ENCODE measurements at regions of chr12 and their contacts with region 1.

Region 1: DNA sequence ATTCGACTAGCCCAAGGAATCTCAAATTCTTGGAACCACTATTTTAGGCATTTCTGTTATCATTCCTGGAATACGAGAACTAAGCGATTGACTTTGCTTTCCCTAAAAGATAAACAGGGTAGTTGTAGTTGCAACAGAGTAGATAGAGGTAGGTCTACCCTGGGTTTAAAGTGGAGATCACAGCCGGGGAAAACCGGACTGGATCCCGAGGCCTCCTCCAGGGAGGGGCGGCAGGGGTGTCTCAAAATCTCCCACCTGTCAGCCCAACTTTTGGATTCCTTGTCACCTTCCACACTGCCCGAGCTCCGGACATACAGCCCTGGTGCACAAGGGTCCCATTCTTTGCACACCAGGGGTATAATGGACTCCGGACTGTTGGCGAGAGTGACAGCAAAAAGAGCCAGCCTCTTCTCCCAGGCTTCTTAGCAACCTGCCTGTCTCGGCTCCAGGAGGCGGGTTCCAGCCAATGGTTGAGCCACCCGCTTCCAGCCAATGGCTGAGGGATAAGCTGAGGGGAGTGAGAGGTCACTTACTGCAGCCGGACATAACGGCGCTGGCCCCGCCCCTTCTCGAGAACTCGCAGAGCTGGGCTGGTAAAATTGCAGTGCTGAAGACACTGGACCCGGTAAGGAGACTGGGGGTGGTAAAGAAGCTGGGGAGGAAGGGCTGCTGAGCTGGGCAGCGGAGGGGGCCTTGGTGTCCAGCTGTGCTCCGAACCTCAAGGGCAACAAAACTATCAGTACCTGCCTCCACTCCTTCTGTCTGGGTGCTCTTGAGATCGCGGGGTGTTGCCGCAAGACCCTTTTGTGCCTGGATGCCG is at the start of gene SUOX:
- DNase-seq: peak; percentile 90 to 94
- H3K4me3 ChIP-seq: peak within 1 kb of the TSS; percentile 77 to 97 (median 89)
- H3K27ac ChIP-seq: peak within 1 kb of the TSS; percentile 72
- H3K4me1 ChIP-seq: peaks cover 0 to 4% (median 0%) of the 10 kb centered on the region in 4 experiments; a peak in 2 of 7 replicates
- H3K27me3 ChIP-seq: no peaks in the 10 kb centered on the region
- CTCF ChIP-seq: no peak
- EP300 ChIP-seq: no peak
- POLR2A ChIP-seq: peak in 1 of 2 experiments; percentile 80; a peak in 2 of 3 replicates
- RAD21 ChIP-seq: no peak
- total RNA-seq, gene SUOX: 22.5 and 23.1 TPM in 2 replicates

Region 2: GRCh38 chr12:55955800-55956508 is 41.0 kb before region 1 on chr12:
- CTCF ChIA-PET with region 1: interaction called, 10 read pairs
- POLR2A ChIA-PET with region 1: no interaction called
- DNase-seq: no peak
- H3K4me3 ChIP-seq: no peak overlapping the region
- H3K27ac ChIP-seq: no peak overlapping the region
- H3K4me1 ChIP-seq: no peaks in the 10 kb centered on the region
- H3K27me3 ChIP-seq: no peaks in the 10 kb centered on the region
- CTCF ChIP-seq: peak in 1 of 3 experiments; percentile 9; a peak in 1 of 4 replicates
- EP300 ChIP-seq: no peak
- POLR2A ChIP-seq: no peak
- RAD21 ChIP-seq: no peak; a peak in 1 of 4 replicates

Region 3: DNA sequence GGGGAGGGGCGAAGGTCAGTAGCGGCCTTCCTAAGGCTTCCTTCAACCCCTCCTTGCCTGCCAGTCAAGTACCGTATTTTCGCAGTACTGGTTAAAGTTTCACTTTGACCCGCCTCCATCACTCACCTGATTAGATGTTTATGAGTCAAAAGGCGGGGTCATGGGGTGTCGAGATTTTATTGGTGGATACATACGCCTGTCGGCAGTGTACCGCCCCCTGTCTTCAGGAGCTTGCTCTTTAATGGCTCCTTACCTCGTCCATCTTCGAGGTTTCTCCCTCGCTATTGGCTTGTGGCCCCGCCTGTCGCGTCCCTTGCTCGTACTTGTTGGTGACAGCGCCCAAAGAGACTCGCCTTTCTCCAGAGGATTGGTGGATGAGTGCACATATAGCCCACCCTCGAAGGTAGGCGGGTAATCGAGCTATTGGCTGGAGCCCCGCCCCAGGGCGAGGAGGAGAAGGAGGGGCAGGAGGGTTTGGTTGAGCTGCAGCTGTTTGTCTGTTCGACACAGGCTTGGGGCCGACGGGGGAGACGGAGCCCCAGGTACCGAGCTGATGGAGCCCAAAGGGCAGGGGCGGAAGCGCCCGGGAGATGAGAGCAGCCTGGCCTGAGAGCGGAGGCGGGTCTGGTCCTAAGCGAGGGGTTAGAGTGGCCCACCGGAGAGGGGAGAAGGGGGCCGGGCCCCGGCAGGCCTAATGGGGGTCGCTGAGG is 23.2 kb before region 1 on chr12 and contains the start of gene RAB5B:
- CTCF ChIA-PET with region 1: interaction called, 14 read pairs
- POLR2A ChIA-PET with region 1: interaction called, 16 read pairs
- DNase-seq: peak; percentile 94 to 100
- H3K4me3 ChIP-seq: peak within 1 kb of the TSS; percentile 65 to 93 (median 88)
- H3K27ac ChIP-seq: peak within 1 kb of the TSS; percentile 12; the same call in 1 of the 2 replicates
- H3K4me1 ChIP-seq: peaks cover 0 to 4% (median 1%) of the 10 kb centered on the region in 4 experiments; a peak in 4 of 7 replicates
- H3K27me3 ChIP-seq: no peaks in the 10 kb centered on the region
- CTCF ChIP-seq: no peak
- EP300 ChIP-seq: no peak
- POLR2A ChIP-seq: peak; percentile 88 to 93
- RAD21 ChIP-seq: no peak
- total RNA-seq, gene RAB5B: 56.7 and 65.6 TPM in 2 replicates

Region 4: GRCh38 chr12:55982319-55982936 is 14.5 kb before region 1 on chr12:
- CTCF ChIA-PET with region 1: interaction called, 42 read pairs
- POLR2A ChIA-PET with region 1: interaction called, 24 read pairs
- DNase-seq: no peak
- H3K4me3 ChIP-seq: no peak overlapping the region
- H3K27ac ChIP-seq: no peak overlapping the region
- H3K4me1 ChIP-seq: no peaks in the 10 kb centered on the region
- H3K27me3 ChIP-seq: no peaks in the 10 kb centered on the region
- CTCF ChIP-seq: no peak
- EP300 ChIP-seq: no peak
- POLR2A ChIP-seq: no peak
- RAD21 ChIP-seq: no peak

Region 5: DNA sequence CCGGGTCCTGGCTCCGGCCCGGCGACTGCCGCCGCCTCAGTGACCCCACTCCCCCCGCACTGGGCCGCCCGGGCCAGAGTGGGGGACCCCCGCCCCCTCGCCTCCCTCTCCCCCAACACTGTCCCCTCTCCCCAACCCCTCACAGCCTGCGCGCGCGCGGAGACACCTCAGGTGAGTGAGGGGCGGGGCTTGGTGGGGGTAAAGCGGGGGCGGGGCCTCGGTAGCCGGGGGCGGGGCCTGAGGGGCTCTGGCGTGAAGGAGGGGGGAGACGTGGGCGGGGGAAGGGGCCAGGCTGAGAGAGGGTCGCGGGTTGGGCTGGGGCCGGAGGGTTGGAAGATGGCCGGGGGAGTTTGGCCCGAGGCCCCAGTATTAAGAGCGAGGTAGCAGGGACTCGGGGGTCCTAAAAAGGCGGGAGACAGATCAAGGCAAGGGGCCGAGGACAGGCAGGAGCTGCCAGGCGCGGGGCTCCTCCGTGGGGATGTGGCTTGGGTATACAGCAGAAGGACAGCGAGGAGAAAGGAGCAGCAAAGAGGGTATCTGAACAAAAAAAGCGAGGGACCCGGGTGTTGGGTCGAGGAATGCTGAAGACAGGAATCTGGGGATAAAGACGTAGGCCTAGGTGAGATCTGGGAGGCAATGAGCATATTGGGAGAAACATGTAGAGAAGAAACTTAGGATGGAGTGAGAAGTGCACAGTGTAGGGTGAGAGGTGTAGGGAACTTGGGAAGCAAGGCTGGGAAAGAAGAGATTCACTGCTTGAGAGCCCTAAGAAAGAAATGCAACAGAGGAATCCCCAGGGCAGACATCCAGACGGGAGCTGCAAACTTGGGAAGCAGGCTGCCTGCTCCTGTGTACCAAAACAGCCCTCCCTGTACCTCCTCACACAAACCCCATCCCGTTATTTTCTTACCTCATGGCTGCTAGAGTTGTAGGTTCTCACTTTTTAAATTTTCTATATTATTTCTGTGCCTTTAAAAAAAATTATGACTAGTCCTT is 10.9 kb after region 1 on chr12:
- CTCF ChIA-PET with region 1: interaction called, 256 read pairs
- POLR2A ChIA-PET with region 1: interaction called, 55 read pairs
- DNase-seq: peak in 1 of 2 experiments; percentile 94
- H3K4me3 ChIP-seq: peak overlapping the region; percentile 52 to 90 (median 83)
- H3K27ac ChIP-seq: peak overlapping the region; percentile 62
- H3K4me1 ChIP-seq: peaks cover 0 to 4% (median 2%) of the 10 kb centered on the region in 4 experiments; a peak in 3 of 7 replicates
- H3K27me3 ChIP-seq: no peaks in the 10 kb centered on the region
- CTCF ChIP-seq: no peak
- EP300 ChIP-seq: no peak
- POLR2A ChIP-seq: peak; percentile 63
- RAD21 ChIP-seq: no peak

Region 6: DNA sequence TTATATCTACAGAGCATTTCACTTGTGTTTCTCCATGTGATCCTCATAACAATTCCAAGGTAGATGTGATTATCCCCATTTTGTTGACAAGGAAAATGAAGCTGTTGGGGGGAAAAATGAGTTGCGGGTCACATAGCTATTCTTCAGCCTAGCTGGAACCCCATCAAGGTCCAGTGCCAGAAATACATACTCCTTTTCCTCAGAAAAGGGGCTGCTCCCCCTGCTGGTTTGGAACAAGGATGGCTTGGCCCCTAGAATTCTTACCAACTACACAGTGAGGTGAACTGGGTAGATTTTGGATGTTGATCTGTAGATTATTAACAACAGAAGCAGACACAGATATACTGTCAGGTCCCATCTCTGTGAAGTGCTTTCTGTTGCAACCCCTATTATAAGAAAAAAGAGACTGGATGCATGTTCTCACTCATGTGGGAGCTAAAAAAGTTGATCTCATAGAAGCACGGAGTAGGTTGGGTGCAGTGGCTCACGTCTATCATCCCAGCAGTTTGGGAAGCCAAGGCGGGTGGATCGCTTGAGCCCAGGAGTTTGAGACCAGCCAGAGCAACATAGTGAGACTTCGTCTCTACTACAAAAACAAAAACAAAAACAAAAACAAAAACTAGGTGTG is 32.9 kb after region 1 on chr12:
- CTCF ChIA-PET with region 1: interaction called, 256 read pairs
- POLR2A ChIA-PET with region 1: interaction called, 13 read pairs
- DNase-seq: peak in 1 of 2 experiments; percentile 52
- H3K4me3 ChIP-seq: no peak overlapping the region
- H3K27ac ChIP-seq: no peak overlapping the region
- H3K4me1 ChIP-seq: no peaks in the 10 kb centered on the region
- H3K27me3 ChIP-seq: no peaks in the 10 kb centered on the region
- CTCF ChIP-seq: peak; percentile 37 to 74 (median 66)
- EP300 ChIP-seq: no peak
- POLR2A ChIP-seq: no peak
- RAD21 ChIP-seq: peak; percentile 59 to 68